Psoas muscle (tissue), 8 donors: ENCODE measurements at regions of chr6 and their contacts with region 1.

Region 1: GRCh38 chr6:27472617-27473400 is at the start of gene ZNF184:
- DNase-seq: peak; percentile 95 to 97
- ATAC-seq: peak; percentile 99 to 100 (median 99)
- H3K4me3 ChIP-seq: peak within 1 kb of the TSS; percentile 94
- H3K27ac ChIP-seq: peak within 1 kb of the TSS; percentile 99
- H3K4me1 ChIP-seq: peaks cover 11% of the 10 kb centered on the region
- H3K27me3 ChIP-seq: no peaks in the 10 kb centered on the region
- CTCF ChIP-seq: no peak
- total RNA-seq, gene ZNF184: 4.2 to 4.9 (median 4.5) TPM

Region 2: GRCh38 chr6:27188885-27189418 is 283.9 kb before region 1 on chr6:
- intact Hi-C with region 1: loop called in 1 of 2 experiments (anchors 10 kb)
- DNase-seq: peak; percentile 40 to 59
- ATAC-seq: peak; percentile 90 to 96 (median 94)
- H3K4me3 ChIP-seq: peak overlapping the region; percentile 86
- H3K27ac ChIP-seq: peak overlapping the region; percentile 71
- H3K4me1 ChIP-seq: peaks cover 4% of the 10 kb centered on the region
- H3K27me3 ChIP-seq: peaks cover 0 to 1% (median 0%) of the 10 kb centered on the region in 3 donors
- CTCF ChIP-seq: peak; percentile 76

Region 3: GRCh38 chr6:27392481-27393022 is 80.3 kb before region 1 on chr6:
- intact Hi-C with region 1: loop called in 1 of 2 experiments (anchors 5 kb)
- DNase-seq: no peak
- ATAC-seq: no peak
- H3K4me3 ChIP-seq: no peak overlapping the region
- H3K27ac ChIP-seq: no peak overlapping the region
- H3K4me1 ChIP-seq: no peaks in the 10 kb centered on the region
- H3K27me3 ChIP-seq: no peaks in the 10 kb centered on the region
- CTCF ChIP-seq: no peak